Right ventricle myocardium inferior (tissue), 1 donor: ENCODE measurements at regions of chr1 and their contacts with region 1.

Region 1: DNA sequence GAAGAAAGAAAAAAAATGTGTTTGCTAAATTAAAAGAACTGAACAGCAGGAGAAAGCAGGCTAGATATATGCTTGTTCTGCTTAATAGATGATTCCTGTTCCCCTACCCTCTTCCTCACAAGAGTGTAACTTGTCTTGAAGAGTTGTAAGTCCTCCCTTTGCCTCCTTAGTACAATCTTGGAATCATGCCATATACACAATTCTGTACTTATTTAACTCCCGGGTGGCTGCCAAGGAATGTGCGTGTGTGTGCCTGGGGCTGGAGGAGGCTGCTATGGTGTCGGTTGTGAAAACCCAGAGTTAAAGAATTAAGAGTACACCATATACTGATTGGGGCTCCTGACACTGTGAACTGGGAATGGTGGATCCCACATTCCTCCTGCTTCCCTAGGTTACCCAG is 194.2 kb downstream of the SIPA1L2 start:
- DNase-seq: no peak
- ATAC-seq: peak; percentile 42

Region 2: DNA sequence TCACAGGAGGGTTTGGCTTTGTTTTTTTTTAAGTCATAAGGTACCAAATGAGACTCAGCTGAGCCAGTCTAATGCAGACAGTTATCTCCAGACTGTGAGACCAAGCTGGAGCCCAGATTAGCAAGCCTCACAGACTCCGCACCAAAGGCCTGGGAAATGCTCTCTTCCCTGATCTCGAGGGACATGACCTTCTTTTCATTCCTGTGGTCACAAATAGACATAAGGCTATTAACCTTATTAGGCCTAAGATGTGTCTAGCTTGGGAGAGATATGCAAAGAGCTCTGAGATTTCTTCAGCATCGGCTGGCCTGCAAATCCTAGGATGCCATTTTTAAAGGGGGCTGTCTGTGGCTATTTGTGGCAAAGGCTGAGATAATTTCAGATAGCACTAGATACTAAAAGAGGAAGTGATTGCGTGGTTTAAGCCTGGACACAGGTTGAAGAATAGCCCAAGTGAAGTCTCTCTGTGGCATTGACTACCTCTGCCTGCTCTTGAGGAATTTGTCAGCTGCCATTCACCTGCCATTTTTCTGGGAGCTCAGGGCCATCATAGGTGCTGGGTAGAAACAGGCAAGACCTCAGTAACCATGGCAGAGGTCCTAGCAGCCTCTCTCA is 107.1 kb before region 1 on chr1:
- intact Hi-C with region 1: loop called (anchors 10 kb)
- DNase-seq: no peak
- ATAC-seq: peak; percentile 60